IMR-90 (cell line): ENCODE measurements at regions of chr10 and their contacts with region 1.

Region 1: DNA sequence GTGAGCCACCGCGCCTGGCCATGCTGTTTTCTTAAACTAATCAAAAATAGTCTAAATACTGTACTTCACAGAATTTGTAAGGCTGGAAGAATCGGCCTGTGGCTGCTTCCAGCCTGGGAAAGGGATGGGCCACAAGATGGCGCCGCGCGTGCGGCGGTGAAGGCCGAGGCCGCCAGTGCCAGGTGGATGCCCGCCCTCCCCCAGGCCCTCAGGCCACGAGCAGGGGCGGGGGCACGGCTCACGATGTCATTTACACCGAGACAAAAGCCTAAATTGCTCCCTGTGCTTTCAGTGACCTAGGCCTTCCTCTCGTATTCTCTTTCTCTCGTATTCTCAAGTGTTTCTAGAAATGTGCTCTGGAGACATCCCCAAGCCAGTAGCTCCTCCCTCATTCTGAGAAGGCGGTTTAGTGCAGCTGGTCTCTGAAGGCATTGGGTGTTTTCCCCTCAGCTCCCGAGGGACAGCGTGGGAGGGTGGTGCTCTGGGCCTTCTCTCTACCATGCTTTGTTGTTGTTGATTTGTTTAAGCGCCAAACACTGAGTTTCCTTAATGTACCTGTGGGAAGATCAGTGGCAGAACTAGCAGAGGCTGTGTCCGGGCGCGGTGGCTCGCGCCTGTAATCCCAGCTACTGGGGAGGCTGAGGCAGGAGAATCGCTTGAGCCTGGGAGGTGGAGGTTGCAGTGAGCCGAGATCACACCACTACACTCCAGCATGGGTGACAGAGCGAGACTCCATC is 68.4 kb downstream of the CDC123 start:
- DNase-seq: peak; percentile 69
- ATAC-seq: peak; percentile 99
- H3K4me3 ChIP-seq: peak overlapping the region; percentile 48
- H3K27ac ChIP-seq: no peak overlapping the region
- H3K4me1 ChIP-seq: no peaks in the 10 kb centered on the region
- H3K27me3 ChIP-seq: no peaks in the 10 kb centered on the region
- CTCF ChIP-seq: peak; percentile 94
- POLR2A ChIP-seq: peak; percentile 61; the same call in 1 of the 2 replicates
- RAD21 ChIP-seq: peak; percentile 98

Region 2: DNA sequence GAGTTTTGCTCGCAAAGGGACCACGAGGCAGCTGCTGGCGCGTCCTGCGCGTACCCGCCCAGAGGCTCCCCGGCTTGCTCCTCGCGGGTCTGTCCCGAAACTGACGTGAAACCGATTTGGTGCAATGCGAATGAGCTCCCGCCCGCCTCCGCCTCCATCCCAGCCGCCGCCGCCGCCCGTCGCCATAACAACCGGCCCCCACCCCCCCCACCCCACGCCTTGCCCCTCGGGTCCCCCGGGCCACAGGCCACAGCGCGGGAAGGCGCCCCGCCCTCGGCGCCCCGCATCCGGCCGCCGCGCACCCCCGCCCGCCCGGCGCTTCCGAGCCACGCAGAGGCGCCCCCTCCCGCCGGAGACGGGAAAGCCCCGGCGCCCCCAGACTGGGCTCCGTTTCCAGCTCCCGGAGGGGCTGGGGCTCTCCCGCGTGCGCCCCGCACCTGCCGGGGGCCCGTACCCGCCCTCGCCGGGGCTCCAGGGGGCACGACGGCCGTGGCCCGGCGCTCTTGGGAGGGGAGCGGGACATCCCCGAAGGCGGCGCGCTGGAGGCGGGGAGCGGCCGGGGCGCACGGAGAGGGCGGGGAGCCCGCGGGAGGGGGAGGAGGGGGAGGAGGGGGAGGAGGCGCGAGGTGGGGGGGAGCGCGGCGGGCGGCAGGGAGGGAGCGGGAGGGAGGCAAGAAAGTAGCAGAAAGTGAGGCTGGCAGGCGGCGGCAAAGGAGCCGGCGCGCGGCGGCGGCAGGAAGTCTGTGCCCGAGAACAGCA is 84.7 kb after region 1 on chr10 and contains the start of gene CAMK1D:
- CTCF ChIA-PET with region 1: no interaction called
- POLR2A ChIA-PET with region 1: no interaction called
- dilution Hi-C with region 1: no loop called
- in situ Hi-C with region 1: loop called (anchors 10 kb)
- intact Hi-C with region 1: loop called (anchors 1 kb)
- DNase-seq: peak; percentile 66
- ATAC-seq: peak; percentile 85
- H3K4me3 ChIP-seq: peak within 1 kb of the TSS; percentile 84
- H3K27ac ChIP-seq: peak within 1 kb of the TSS; percentile 37; the same call in 1 of the 2 replicates
- H3K4me1 ChIP-seq: no peaks in the 10 kb centered on the region
- H3K27me3 ChIP-seq: peaks cover 4% of the 10 kb centered on the region; the same call in 1 of the 2 replicates
- CTCF ChIP-seq: peak; percentile 43
- POLR2A ChIP-seq: peak; percentile 60; the same call in 1 of the 2 replicates
- RAD21 ChIP-seq: no peak; the same call in 1 of the 2 replicates
- total RNA-seq, gene CAMK1D: 4.2 and 5.0 TPM in 2 replicates

Region 3: DNA sequence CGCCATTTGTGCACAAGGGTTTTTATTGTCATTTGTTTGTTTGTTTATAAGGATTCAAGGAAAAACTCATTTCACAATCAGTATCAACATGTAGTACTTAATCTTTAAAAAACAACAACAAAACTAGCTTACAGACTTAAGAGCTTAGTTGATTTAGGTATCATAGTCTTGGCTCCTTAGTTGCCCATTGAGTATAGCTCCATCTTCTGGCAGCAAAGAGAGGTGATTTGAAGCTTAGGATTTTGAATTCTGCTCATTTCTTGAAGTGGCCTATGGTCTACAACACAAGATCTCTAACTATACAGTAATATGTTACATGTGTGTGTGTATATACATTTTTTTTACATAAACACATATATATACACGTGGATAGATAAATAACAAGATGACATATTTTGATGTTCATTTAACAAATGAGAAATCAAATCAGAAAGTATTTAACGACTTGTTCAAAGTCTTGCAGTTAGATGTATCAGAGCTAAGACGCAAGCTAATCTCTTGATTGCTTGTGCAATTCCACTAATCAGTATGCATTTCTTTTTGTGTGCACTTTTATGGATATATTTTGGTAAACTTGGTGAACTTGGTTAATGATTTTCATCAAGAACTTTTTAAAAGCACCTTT is 392.3 kb after region 1 on chr10:
- CTCF ChIA-PET with region 1: interaction called, 10 read pairs
- POLR2A ChIA-PET with region 1: no interaction called
- dilution Hi-C with region 1: no loop called
- in situ Hi-C with region 1: no loop called
- intact Hi-C with region 1: loop called (anchors 1 kb)
- DNase-seq: peak; percentile 75
- ATAC-seq: peak; percentile 71
- H3K4me3 ChIP-seq: no peak overlapping the region
- H3K27ac ChIP-seq: no peak overlapping the region
- H3K4me1 ChIP-seq: no peaks in the 10 kb centered on the region
- H3K27me3 ChIP-seq: no peaks in the 10 kb centered on the region
- CTCF ChIP-seq: peak; percentile 81
- POLR2A ChIP-seq: no peak
- RAD21 ChIP-seq: peak; percentile 81

Region 4: GRCh38 chr10:12902135-12902572 is 637.8 kb after region 1 on chr10:
- CTCF ChIA-PET with region 1: no interaction called
- POLR2A ChIA-PET with region 1: no interaction called
- dilution Hi-C with region 1: no loop called
- in situ Hi-C with region 1: loop called (anchors 10 kb)
- intact Hi-C with region 1: loop called (anchors 1 kb)
- DNase-seq: peak; percentile 64
- ATAC-seq: peak; percentile 75
- H3K4me3 ChIP-seq: no peak overlapping the region
- H3K27ac ChIP-seq: no peak overlapping the region
- H3K4me1 ChIP-seq: no peaks in the 10 kb centered on the region
- H3K27me3 ChIP-seq: peaks cover 4% of the 10 kb centered on the region; the same call in 1 of the 2 replicates
- CTCF ChIP-seq: peak; percentile 81
- POLR2A ChIP-seq: no peak
- RAD21 ChIP-seq: peak; percentile 81

Region 5: GRCh38 chr10:13056456-13057077 is 792.2 kb after region 1 on chr10:
- CTCF ChIA-PET with region 1: no interaction called
- POLR2A ChIA-PET with region 1: no interaction called
- dilution Hi-C with region 1: no loop called
- in situ Hi-C with region 1: loop called (anchors 25 kb)
- intact Hi-C with region 1: loop called (anchors 5 kb)
- DNase-seq: peak; percentile 16
- ATAC-seq: peak; percentile 85
- H3K4me3 ChIP-seq: no peak overlapping the region
- H3K27ac ChIP-seq: no peak overlapping the region
- H3K4me1 ChIP-seq: no peaks in the 10 kb centered on the region
- H3K27me3 ChIP-seq: peaks cover 13% of the 10 kb centered on the region; the same call in 1 of the 2 replicates
- CTCF ChIP-seq: peak; percentile 49
- POLR2A ChIP-seq: no peak
- RAD21 ChIP-seq: peak; percentile 51

Region 6: GRCh38 chr10:13074561-13075451 is 810.4 kb after region 1 on chr10:
- CTCF ChIA-PET with region 1: interaction called, 9 read pairs
- POLR2A ChIA-PET with region 1: no interaction called
- dilution Hi-C with region 1: no loop called
- in situ Hi-C with region 1: loop called (anchors 25 kb)
- intact Hi-C with region 1: loop called (anchors 2 kb)
- DNase-seq: peak; percentile 60
- ATAC-seq: peak; percentile 95
- H3K4me3 ChIP-seq: no peak overlapping the region
- H3K27ac ChIP-seq: no peak overlapping the region
- H3K4me1 ChIP-seq: no peaks in the 10 kb centered on the region
- H3K27me3 ChIP-seq: 0 out of 2 replicates have a peak, but pooled peaks cover 2% of the 10 kb centered on the region
- CTCF ChIP-seq: peak; percentile 87
- POLR2A ChIP-seq: no peak
- RAD21 ChIP-seq: peak; percentile 94

Region 7: DNA sequence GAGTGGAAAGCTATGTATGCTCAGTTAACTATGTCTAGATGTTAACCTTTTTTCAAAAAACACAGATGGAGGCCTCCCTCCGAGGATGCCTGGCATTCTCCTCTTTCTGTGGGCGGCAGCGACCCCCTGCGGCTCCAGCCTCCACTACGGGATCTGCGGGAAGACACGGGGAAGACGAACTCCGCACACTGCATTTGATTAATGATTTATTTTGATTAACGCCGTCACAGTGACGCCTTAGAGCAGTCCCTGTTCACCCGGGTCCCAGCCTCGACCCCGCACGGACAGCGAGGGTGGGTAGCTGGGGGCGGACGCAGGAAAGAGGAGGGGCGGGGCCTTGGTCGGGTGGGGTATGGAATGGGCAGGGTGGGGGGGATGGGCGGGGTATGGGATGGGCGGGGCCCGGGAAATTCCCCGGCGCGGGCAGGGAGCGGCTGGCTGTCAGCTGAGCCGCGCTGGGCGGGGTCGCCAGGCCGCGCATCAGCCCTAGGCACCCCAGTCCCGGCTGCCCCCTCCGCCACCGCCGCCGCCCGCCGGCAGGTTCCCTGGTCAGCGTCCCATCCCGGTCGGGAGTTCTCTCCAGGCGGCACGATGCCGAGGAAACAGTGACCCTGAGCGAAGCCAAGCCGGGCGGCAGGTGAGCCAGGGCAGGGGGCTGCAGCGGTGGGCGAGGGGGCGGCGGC is 835.4 kb after region 1 on chr10 and contains the start of gene OPTN:
- CTCF ChIA-PET with region 1: no interaction called
- POLR2A ChIA-PET with region 1: no interaction called
- dilution Hi-C with region 1: no loop called
- in situ Hi-C with region 1: no loop called
- intact Hi-C with region 1: loop called (anchors 1 kb)
- DNase-seq: peak; percentile 83
- ATAC-seq: peak; percentile 88
- H3K4me3 ChIP-seq: peak within 1 kb of the TSS; percentile 73
- H3K27ac ChIP-seq: peak within 1 kb of the TSS; percentile 93
- H3K4me1 ChIP-seq: peaks cover 9% of the 10 kb centered on the region
- H3K27me3 ChIP-seq: no peaks in the 10 kb centered on the region
- CTCF ChIP-seq: peak; percentile 96
- POLR2A ChIP-seq: peak; percentile 69; the same call in 1 of the 2 replicates
- RAD21 ChIP-seq: peak; percentile 89
- total RNA-seq, gene OPTN: 34.8 and 56.9 TPM in 2 replicates